PC-3 (cell line): ENCODE measurements at regions of chr11 and their contacts with region 1.

Region 1: DNA sequence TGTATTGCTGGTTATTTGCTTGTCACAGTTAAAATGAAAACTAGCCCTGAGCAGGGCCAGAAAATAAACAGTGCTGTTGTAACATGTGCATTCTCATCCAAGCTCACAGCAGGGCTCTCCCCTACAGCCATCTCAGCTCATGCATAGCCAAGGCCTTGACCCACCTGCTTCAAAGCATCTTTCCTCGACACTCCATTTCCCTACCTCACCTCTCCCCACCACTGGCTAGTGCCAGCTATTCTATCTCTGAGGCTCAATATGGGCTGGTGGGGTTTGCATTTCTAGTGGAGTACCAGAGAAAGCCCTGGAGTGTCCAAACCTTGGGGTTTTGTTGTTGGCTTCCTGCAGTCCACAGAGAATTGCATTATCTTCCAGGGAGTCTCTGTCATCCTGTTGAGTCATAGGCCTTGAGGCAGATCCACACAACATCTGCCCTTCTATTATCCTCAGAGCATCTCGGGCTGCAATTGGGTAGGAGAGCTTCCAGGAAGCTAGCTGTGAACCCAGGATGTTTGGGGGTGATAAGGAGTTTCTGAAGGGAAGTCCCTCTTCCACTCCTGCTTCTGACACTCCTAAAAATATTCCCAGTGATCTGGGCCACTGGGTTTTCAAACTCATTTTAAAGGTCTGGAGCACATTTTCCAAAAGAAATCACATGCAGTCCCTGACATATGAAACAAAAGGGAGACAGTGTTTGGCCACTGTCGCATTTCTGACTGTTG is 36.1 kb upstream of the AMOTL1 start:
- DNase-seq: peak; percentile 90
- ATAC-seq: peak; percentile 59
- H3K4me3 ChIP-seq: peak overlapping the region; percentile 4; the same call in 1 of the 2 replicates
- H3K27ac ChIP-seq: peak overlapping the region; percentile 96
- H3K4me1 ChIP-seq: peaks cover 90% of the 10 kb centered on the region
- H3K27me3 ChIP-seq: no peaks in the 10 kb centered on the region
- CTCF ChIP-seq: no peak

Region 2: DNA sequence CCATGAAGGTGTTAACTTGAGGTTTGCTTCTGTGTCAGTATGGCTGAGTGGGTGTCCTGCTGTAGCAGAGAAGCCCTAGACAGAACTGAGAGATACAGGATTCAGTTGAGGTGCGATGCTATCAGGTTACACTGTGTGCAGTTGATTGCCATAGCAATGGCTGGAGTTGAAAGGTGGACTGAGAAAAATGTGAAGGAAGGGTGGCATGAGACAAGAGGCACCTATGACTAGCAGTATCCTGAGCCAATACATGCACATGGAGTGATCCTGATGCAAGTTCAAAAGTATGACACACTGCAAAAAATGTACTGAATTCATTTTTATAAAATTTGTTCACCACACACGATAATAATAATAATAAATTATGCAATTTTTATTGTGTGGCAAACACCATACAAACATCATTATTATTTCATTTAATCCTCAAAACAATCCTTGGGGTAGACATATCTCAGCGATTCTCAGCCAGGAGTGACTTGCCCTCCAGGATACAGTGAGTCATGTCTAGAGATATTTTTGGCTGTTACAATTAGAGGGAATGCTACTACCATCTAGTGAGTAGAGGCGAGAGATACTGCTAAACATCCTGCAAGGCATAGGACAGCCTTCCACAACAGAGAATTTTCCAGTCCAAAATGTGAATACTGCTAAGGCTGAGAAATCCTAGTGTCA is 168.7 kb before region 1 on chr11:
- CTCF ChIA-PET with region 1: no interaction called
- POLR2A ChIA-PET with region 1: no interaction called
- intact Hi-C with region 1: no loop called
- DNase-seq: peak; percentile 76
- ATAC-seq: peak; percentile 99
- H3K4me3 ChIP-seq: no peak overlapping the region
- H3K27ac ChIP-seq: no peak overlapping the region
- H3K4me1 ChIP-seq: peaks cover 13% of the 10 kb centered on the region
- H3K27me3 ChIP-seq: no peaks in the 10 kb centered on the region
- CTCF ChIP-seq: peak; percentile 76

Region 3: DNA sequence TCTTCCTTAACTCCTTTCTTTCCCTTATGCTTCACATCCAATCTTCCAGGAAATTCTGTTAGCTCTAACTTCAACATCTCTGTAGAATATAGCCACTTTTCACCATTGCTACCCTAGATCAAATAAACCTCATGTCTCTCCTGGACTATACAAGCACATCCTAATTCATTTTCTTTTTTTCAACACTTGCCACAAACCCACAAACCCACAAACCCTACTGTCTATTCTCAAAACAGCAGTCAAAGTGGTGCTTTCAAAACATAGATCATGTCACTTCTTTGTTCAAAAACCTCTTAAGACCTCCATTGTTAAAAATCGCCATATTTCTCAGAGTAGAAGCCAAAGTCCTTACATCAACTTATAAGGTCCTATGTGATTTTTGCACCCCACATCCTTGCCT is 70.6 kb before region 1 on chr11:
- CTCF ChIA-PET with region 1: no interaction called
- POLR2A ChIA-PET with region 1: no interaction called
- intact Hi-C with region 1: no loop called
- DNase-seq: no peak
- ATAC-seq: no peak
- H3K4me3 ChIP-seq: no peak overlapping the region
- H3K27ac ChIP-seq: no peak overlapping the region
- H3K4me1 ChIP-seq: peaks cover 33% of the 10 kb centered on the region
- H3K27me3 ChIP-seq: no peaks in the 10 kb centered on the region
- CTCF ChIP-seq: no peak

Region 4: DNA sequence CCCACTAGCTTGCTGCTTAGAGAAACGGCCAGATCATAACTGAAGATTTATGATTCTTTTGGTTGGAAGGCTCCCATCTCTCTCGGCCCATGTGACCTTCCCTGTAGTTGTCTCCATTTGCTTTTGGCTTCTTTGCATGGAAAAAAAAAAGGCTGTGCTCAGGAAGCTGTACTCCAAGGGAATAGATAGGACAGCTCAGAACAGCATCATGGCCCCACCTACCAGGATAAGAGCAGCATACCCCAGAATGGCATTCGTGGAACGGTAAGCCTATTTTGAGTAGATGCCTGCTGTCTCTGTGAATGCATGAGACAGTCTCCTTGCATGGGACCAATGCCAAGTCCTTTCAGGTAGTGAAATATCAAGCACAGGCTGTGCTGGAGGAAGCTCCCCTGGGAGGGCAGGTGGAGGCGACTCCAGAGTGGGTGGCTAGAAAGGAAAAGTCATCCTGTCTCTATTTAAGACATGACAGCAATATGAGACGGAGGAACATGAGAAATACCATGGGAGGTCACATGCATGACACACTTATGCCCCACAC is 58.0 kb before region 1 on chr11:
- CTCF ChIA-PET with region 1: no interaction called
- POLR2A ChIA-PET with region 1: no interaction called
- intact Hi-C with region 1: loop called (anchors 5 kb)
- DNase-seq: peak; percentile 75
- ATAC-seq: no peak
- H3K4me3 ChIP-seq: no peak overlapping the region
- H3K27ac ChIP-seq: 0 out of 2 replicates have a peak overlapping the region, but pooled peaks have one; percentile 86
- H3K4me1 ChIP-seq: peaks cover 64% of the 10 kb centered on the region
- H3K27me3 ChIP-seq: no peaks in the 10 kb centered on the region
- CTCF ChIP-seq: no peak

Region 5: GRCh38 chr11:94705896-94706615 is 26.0 kb before region 1 on chr11:
- CTCF ChIA-PET with region 1: no interaction called
- POLR2A ChIA-PET with region 1: no interaction called
- intact Hi-C with region 1: loop called (anchors 2 kb)
- DNase-seq: peak; percentile 74
- ATAC-seq: peak; percentile 36
- H3K4me3 ChIP-seq: peak overlapping the region; percentile 3; the same call in 1 of the 2 replicates
- H3K27ac ChIP-seq: peak overlapping the region; percentile 4; the same call in 1 of the 2 replicates
- H3K4me1 ChIP-seq: peaks cover 30% of the 10 kb centered on the region
- H3K27me3 ChIP-seq: no peaks in the 10 kb centered on the region
- CTCF ChIP-seq: 0 out of 2 replicates have a peak, but pooled peaks have one; percentile 10

Region 6: DNA sequence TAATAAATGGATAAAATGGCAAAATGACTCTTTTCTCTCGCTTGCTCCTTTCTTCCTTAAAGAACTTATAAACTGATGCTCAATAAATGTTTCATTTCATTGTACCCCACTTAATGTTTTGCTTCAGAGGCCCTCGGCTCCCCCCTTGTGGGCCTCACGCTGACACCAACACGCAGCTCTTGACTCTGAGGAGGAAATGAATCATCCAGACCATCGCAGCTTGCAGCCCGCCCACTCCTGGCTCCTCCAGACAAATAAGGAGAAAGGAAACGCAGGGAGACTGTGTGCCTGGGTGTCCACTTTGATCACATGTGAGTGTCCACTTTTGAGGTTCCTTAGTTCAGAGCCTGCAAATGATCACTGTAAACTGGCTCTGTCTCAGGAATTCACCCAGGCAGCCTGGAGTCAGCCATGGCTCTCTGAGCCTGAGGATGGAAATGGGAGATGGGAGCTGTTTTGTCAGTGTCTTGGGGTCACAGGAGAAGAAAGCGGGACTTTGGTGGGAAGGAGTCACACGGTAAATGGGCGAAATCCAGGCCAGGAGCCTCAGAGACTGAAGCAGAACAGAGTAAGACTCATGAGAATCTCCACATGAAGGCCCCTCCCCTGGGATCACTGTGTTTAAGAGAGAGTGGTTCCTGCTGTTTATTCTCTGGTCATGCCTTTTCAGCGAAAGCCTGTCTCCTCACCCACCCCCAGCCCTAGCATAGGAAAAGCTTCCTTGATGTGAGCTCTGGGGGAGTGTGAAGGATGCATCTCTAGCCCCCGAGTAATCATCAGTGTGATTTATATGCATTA is 144.8 kb after region 1 on chr11:
- CTCF ChIA-PET with region 1: no interaction called
- POLR2A ChIA-PET with region 1: no interaction called
- intact Hi-C with region 1: loop called (anchors 5 kb)
- DNase-seq: peak; percentile 84
- ATAC-seq: peak; percentile 79
- H3K4me3 ChIP-seq: no peak overlapping the region
- H3K27ac ChIP-seq: peak overlapping the region; percentile 22
- H3K4me1 ChIP-seq: peaks cover 44% of the 10 kb centered on the region
- H3K27me3 ChIP-seq: no peaks in the 10 kb centered on the region
- CTCF ChIP-seq: peak; percentile 58